Dendritic cell treated with granulocyte-macrophage colony-stimulating factor and Interleukin-4, amounts not matched to agents 40 ng/mL and 50 ng/mL, for 4 days (primary cell): ENCODE measurements at regions of chr10 and their contacts with region 1.

Region 1: DNA sequence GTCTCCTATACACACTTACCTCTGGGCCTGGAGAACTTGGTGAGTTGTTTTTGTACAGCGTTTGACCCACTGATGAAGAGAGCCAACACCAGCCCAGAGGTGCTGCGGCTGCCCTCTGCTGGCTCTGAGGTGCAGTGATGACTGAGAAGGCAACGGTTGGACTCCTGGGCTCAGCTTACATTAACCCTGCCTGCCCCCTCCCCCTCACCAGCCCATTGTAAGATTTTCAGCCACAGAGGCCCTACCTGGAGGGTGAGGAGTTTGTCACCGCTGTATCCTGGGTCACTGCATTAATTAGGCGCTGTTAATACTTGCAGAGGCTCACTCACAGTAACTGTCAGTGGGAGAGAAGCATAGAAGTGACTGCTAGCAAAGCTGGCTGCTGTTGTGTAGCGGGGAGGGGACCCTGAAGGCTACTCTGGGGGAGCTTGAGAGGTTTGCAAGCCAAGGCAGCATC is 19.0 kb upstream of the ANKRD2 start:
- H3K4me3 Mint-ChIP-seq: no peak overlapping the region
- H3K27ac Mint-ChIP-seq: no peak overlapping the region
- H3K4me1 Mint-ChIP-seq: peaks cover 11% of the 10 kb centered on the region
- H3K27me3 Mint-ChIP-seq: no peaks in the 10 kb centered on the region

Region 2: DNA sequence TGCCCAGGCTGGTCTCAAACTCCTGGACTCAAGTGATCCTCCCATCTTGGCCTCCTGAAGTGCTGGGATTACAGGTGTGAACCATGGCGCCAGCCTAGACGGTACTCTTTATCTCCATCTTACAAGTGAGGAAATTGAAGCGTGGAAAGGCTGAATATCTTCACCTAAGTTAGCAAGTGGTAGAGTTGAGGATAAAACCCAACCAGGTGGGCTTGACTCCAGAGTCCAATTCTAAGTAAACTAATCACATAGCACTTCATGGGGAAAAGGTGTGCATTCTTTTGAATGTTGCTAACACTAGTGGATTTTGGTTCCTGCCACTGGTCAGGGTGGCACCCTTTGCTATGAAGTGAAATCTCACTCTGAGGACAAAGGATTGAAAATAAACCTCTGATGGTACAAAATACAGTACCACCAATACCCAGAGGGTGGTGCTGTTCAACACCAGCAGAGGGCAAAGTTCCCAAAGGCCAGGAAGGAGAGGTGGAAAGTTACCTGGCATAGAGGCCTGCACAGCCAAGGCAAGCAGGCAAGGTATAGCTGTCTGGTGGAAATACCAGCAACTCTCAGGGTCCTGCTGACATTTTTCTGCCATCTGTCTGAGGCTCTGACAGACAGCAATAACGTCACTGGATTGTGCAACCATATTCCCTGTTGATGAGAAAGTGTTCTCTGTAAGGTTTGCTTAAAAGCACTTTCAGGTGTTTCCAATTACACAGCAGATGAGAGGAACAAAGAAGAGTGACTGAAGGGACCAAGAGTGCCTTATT is 90.1 kb before region 1 on chr10:
- intact Hi-C with region 1: loop called (anchors 1 kb)
- H3K4me3 Mint-ChIP-seq: no peak overlapping the region
- H3K27ac Mint-ChIP-seq: no peak overlapping the region
- H3K4me1 Mint-ChIP-seq: no peaks in the 10 kb centered on the region
- H3K27me3 Mint-ChIP-seq: no peaks in the 10 kb centered on the region

Region 3: DNA sequence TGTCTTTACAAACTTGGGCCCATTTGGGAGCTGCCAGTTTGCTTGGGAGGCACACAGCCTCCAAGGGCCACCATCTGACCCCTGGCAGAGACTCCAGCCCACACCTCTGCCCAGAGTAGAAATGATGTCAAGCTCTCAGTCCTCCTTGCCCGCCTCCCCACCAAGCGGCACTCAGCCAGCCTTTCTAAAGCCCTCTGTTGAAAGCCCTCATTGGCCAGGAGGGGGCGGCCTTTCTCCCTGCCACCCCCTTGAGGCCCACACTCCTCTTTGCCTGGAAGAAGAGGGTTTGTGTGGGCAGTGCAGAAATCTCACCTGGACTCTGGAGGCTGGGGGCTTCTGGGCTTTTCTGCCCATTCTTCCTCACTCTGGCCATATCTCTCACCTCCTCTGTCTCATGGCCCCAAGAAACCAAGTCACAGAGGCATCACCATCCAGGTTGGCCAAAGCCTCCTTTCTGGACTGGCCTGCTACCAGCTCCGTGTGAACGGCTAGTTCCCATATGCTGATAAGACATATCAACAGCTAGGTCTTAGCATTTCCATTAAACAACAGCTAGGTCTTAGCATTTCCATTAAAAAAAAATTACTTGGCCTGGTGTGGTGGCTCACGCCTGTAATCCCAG is 18.7 kb before region 1 on chr10:
- intact Hi-C with region 1: loop called (anchors 1 kb)
- H3K4me3 Mint-ChIP-seq: no peak overlapping the region
- H3K27ac Mint-ChIP-seq: no peak overlapping the region
- H3K4me1 Mint-ChIP-seq: peaks cover 20% of the 10 kb centered on the region
- H3K27me3 Mint-ChIP-seq: no peaks in the 10 kb centered on the region